PC-9 (cell line): ENCODE measurements at regions of chr16 and their contacts with region 1.

Region 1: DNA sequence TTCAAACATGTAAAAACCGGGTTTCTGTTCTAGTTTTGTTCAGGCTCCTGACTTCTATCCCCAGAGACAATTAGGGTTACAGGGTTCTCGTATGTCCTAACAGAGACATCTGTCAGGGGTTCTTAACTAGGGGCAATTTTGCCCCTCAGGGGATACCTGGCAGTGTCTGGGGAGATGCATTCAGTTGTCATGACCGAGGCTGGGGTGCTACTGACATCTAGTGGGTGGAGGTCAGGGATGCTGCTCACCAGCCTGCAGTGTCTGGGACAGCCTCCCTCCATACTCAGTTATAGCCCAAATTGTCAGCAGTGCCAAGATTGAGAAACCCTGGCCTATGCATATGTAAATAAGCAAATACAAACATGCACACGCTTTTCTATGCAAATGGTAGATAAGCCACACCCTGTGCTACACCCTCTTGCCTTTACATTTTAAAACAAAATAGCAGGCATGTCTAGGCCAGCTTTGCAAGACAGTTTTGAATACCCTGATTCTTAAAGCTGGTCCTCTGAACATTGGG is 37.4 kb downstream of the CLEC16A start:
- DNase-seq: peak in 1 of 2 experiments; percentile 16
- H3K4me3 ChIP-seq: no peak overlapping the region
- H3K27ac ChIP-seq: no peak overlapping the region
- H3K4me1 ChIP-seq: peaks cover 22% of the 10 kb centered on the region
- H3K27me3 ChIP-seq: no peaks in the 10 kb centered on the region
- CTCF ChIP-seq: peak; percentile 50

Region 2: GRCh38 chr16:10708969-10709368 is 272.8 kb before region 1 on chr16:
- CTCF ChIA-PET with region 1: no interaction called
- POLR2A ChIA-PET with region 1: no interaction called
- intact Hi-C with region 1: no loop called
- DNase-seq: no peak
- H3K4me3 ChIP-seq: no peak overlapping the region
- H3K27ac ChIP-seq: no peak overlapping the region
- H3K4me1 ChIP-seq: no peaks in the 10 kb centered on the region; the same call in 1 of the 2 replicates
- H3K27me3 ChIP-seq: no peaks in the 10 kb centered on the region
- CTCF ChIP-seq: no peak

Region 3: GRCh38 chr16:10776280-10776679 is 205.5 kb before region 1 on chr16:
- CTCF ChIA-PET with region 1: no interaction called
- POLR2A ChIA-PET with region 1: no interaction called
- intact Hi-C with region 1: no loop called
- DNase-seq: no peak
- H3K4me3 ChIP-seq: no peak overlapping the region
- H3K27ac ChIP-seq: no peak overlapping the region
- H3K4me1 ChIP-seq: no peaks in the 10 kb centered on the region
- H3K27me3 ChIP-seq: no peaks in the 10 kb centered on the region
- CTCF ChIP-seq: no peak

Region 4: GRCh38 chr16:10949370-10949970 is 32.3 kb before region 1 on chr16:
- CTCF ChIA-PET with region 1: no interaction called
- POLR2A ChIA-PET with region 1: interaction called, 14 read pairs
- intact Hi-C with region 1: no loop called
- DNase-seq: peak; percentile 42 to 79
- H3K4me3 ChIP-seq: no peak overlapping the region
- H3K27ac ChIP-seq: peak overlapping the region; percentile 41
- H3K4me1 ChIP-seq: peaks cover 45% of the 10 kb centered on the region
- H3K27me3 ChIP-seq: no peaks in the 10 kb centered on the region
- CTCF ChIP-seq: no peak; the same call in 1 of the 2 replicates

Region 5: DNA sequence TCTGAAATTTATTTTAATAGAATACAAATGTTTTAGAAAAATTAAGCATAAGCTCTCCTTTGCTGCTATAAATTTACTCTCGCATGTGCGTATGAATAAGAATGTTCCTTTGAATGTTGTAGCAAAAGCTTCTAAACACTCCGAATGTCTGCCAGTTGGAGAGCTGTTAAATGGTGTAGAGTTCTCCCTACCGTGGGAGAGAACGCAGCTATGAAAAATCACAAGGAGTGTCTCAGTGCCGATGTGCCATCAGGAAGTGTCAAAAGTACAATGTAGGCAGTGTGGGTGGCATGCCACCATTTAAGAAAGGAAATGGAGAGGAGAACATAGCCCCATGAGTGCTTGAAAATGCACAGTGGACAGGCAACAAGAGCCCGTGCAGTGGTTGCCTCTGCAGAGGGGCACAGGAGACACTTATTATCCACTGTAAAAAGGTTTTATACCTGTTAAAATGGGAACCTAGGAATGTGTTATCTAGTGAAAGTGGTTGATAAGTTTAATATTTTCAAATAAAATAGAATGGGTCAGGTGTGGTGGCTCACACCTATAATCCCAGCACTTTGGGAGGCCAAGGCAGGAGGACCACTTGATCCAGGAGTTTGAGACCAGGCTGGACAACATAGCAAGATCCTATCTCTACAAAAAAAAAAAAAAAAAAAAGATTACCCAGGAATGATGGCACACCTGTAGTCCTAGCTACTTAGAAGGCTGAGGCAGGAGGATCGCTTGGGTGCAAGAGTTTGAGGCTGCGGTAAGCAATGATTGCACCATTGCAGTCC is 130.3 kb after region 1 on chr16:
- CTCF ChIA-PET with region 1: no interaction called
- POLR2A ChIA-PET with region 1: no interaction called
- intact Hi-C with region 1: no loop called
- DNase-seq: no peak
- H3K4me3 ChIP-seq: no peak overlapping the region
- H3K27ac ChIP-seq: no peak overlapping the region
- H3K4me1 ChIP-seq: no peaks in the 10 kb centered on the region
- H3K27me3 ChIP-seq: no peaks in the 10 kb centered on the region
- CTCF ChIP-seq: no peak

Region 6: DNA sequence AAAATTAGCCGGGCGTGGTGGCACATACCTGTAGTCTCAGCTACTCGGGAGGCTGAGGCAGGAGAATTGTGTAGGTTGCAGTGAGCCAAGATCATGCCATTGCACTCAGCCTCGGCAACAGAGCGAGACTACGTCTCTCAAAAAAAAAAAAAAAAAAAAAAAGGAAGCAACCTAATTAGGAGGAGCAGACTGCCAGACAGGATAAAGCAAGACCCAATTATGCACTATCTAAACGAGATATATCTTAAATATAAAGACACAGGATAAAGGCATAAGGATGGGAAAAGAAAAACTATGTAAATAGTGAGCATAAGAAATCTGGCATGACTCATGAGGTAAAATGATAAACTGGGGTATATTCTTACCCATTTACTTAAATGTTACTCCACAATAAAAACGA is 756.0 kb after region 1 on chr16:
- CTCF ChIA-PET with region 1: no interaction called
- POLR2A ChIA-PET with region 1: interaction called, 15 read pairs
- intact Hi-C with region 1: no loop called
- DNase-seq: no peak
- H3K4me3 ChIP-seq: no peak overlapping the region
- H3K27ac ChIP-seq: no peak overlapping the region
- H3K4me1 ChIP-seq: peaks cover 12% of the 10 kb centered on the region
- H3K27me3 ChIP-seq: no peaks in the 10 kb centered on the region
- CTCF ChIP-seq: no peak